Naive thymus-derived CD8-positive, alpha-beta T cell (primary cell): ENCODE measurements at regions of chr15 and their contacts with region 1.

Region 1: GRCh38 chr15:90931737-90932659 is at the start of gene HDDC3:
- DNase-seq: peak; percentile 78 to 93 (median 87)
- ATAC-seq: peak; percentile 59 to 60
- H3K4me3 Mint-ChIP-seq: peak within 1 kb of the TSS; percentile 96 to 99 (median 98)
- H3K27ac Mint-ChIP-seq: peak within 1 kb of the TSS; percentile 94 to 100 (median 98)
- H3K4me1 Mint-ChIP-seq: peaks cover 26 to 60% (median 53%) of the 10 kb centered on the region in 4 donors
- H3K27me3 Mint-ChIP-seq: no peaks in the 10 kb centered on the region
- polyA plus RNA-seq, gene HDDC3: 34.1 to 47.6 (median 45.5) TPM

Region 2: DNA sequence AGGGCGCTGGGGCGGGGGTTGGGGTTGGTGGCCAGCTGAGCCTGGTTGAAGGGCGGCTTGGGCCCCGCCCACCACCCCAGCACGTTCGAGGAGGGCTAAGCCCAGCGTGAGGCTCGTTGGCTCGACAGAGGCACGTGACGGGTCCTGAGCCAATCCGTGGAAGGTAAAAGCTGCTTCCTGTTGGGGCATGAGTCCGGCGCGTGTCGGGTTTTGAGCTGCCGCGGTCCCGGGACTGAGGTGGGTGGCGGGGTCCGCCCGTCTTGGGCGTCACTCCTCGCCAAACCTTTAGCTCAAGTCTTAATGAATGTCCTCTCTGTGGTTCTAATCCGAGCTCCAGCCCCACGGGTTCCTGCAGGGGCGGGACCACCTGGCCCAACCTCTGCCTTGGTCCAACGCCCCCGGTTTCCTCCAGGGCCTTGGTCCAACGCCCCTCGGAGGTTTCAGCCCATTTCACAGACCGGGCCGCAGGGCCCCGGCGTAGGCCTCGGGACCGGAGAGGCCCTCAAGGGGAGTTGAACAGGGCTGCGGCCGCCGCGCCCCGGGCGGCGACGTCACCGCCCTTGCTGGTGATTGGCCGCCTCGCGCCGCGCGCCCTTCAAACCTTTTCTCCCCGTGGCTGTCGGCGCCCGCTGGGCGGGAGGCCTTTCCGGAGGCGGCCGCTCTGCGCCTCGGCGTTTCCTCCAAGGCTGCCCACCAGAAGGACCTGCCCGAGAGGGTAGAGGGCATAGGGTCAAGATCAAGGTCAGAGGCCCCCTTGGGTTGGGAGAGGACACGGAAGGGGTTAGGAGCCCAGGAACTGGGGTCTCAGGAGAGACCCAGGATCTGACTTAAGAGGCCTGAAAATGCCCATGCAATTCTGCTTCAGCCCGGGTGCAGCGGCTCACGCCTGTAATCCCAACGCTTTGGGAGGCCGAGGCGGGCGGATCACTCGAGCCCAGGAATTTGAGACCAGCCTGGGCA is 23.0 kb after region 1 on chr15 and contains the start of gene RCCD1:
- POLR2A ChIA-PET with region 1: interaction called, 56 read pairs
- DNase-seq: peak; percentile 75 to 94 (median 82)
- ATAC-seq: peak; percentile 97 to 98
- H3K4me3 Mint-ChIP-seq: peak within 1 kb of the TSS; percentile 82 to 90 (median 88)
- H3K27ac Mint-ChIP-seq: peak within 1 kb of the TSS; percentile 68 to 97 (median 93)
- H3K4me1 Mint-ChIP-seq: peaks cover 4 to 23% (median 12%) of the 10 kb centered on the region in 4 donors
- H3K27me3 Mint-ChIP-seq: no peaks in the 10 kb centered on the region
- polyA plus RNA-seq, gene RCCD1: 2.2 to 4.7 (median 3.1) TPM